Kidney (tissue), 22 donors: ENCODE measurements at regions of chr1 and their contacts with region 1.

Region 1: GRCh38 chr1:180851995-180852887 is 60.5 kb upstream of the KIAA1614 start:
- DNase-seq: no peak
- H3K4me3 ChIP-seq: no peak overlapping the region
- H3K27ac ChIP-seq: no peak overlapping the region
- H3K4me1 ChIP-seq: no peaks in the 10 kb centered on the region
- H3K27me3 ChIP-seq: no peaks in the 10 kb centered on the region
- CTCF ChIP-seq: no peak

Region 2: GRCh38 chr1:180527101-180527669 is 325.1 kb before region 1 on chr1:
- intact Hi-C with region 1: loop called (anchors 10 kb)
- DNase-seq: no peak
- H3K4me3 ChIP-seq: no peak overlapping the region
- H3K27ac ChIP-seq: no peak overlapping the region
- H3K4me1 ChIP-seq: peaks cover 0 to 5% (median 0%) of the 10 kb centered on the region in 3 donors
- H3K27me3 ChIP-seq: no peaks in the 10 kb centered on the region
- CTCF ChIP-seq: no peak